ENCODE measurements at regions of chr14 and their contacts with region 1.

Region 1: GRCh38 chr14:58637391-58638230 is at the start of gene DACT1:
- DNase-seq: no peak
- H3K4me3 ChIP-seq: peak within 1 kb of the TSS; percentile 85
- CTCF ChIP-seq: peak; percentile 8

Region 2: DNA sequence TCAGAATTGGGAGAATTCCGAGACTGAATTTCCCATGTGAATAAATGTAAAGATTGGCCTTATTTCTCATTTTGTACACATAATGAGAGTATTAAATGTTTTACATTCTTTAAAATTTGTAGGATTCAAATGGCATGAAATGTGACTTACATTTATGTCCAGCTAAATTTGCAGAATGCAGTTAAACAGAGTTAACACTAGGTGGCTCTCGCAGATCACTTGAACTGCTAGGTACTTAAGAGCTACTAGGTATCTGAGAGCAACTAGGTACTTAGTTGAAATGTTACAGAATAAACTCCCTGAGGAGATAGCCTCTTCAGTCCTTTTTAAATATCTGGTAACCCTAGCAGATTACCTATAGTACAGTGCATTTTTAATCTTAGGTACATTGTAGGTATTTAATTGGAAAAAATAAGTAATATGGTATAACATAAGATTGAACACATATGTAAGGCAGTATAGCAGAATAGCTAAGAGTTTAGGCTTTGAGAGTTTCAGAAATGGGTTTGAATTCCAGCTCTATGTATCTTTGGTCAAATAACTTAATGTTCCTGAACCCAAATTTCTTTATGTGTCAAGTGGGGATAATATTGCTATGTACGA is 136.3 kb before region 1 on chr14:
- CTCF ChIA-PET with region 1: interaction called, 148 read pairs
- POLR2A ChIA-PET with region 1: interaction called, 18 read pairs
- DNase-seq: peak; percentile 74
- H3K4me3 ChIP-seq: no peak overlapping the region
- CTCF ChIP-seq: peak; percentile 73

Region 3: DNA sequence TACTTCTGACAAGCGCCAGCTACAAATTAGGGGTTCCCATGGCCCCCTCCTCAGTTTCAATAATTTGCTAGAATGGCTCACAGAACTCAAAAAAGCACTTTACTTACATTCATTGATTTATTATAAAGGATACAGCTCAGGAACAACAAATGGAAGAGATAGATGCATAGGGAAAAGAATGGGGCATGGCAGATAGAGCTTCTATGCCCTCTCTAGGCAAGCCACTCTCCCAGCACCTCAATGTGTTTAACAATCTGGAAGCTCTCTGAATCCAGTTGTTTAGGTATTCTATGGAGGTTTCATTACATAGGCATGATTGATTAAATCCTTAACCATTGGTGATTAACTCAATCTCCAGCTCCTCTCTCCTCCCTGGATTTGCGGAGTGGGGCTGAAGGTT is 366.4 kb after region 1 on chr14:
- CTCF ChIA-PET with region 1: interaction called, 49 read pairs
- POLR2A ChIA-PET with region 1: no interaction called
- DNase-seq: no peak
- H3K4me3 ChIP-seq: no peak overlapping the region
- CTCF ChIP-seq: peak; percentile 47

Region 4: DNA sequence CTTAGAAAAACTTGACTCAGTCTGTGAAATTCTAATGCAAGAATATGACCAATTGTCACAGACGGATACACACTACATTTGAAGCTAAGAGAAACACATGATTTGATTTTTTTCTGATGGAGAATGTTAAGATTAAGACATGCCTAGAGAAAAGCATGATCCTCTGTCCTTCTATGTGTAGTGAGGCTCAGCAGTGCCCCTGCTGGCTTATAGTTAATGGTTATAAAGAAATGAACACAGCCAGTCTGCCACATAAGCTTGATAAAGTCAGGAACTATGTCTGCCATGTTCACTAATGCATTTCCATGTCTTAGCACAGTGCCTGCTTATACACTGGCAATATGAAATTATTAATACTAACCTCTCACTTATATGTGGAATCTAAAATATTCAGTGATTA is 382.8 kb after region 1 on chr14:
- CTCF ChIA-PET with region 1: interaction called, 17 read pairs
- POLR2A ChIA-PET with region 1: no interaction called
- DNase-seq: no peak
- H3K4me3 ChIP-seq: no peak overlapping the region
- CTCF ChIP-seq: peak; percentile 41

Region 5: GRCh38 chr14:59055439-59056045 is 417.9 kb after region 1 on chr14:
- CTCF ChIA-PET with region 1: interaction called, 25 read pairs
- POLR2A ChIA-PET with region 1: no interaction called
- DNase-seq: peak; percentile 5
- H3K4me3 ChIP-seq: no peak overlapping the region
- CTCF ChIP-seq: peak; percentile 57